Endothelial cell of umbilical vein (primary cell): ENCODE measurements at regions of chr2 and their contacts with region 1.

Region 1: DNA sequence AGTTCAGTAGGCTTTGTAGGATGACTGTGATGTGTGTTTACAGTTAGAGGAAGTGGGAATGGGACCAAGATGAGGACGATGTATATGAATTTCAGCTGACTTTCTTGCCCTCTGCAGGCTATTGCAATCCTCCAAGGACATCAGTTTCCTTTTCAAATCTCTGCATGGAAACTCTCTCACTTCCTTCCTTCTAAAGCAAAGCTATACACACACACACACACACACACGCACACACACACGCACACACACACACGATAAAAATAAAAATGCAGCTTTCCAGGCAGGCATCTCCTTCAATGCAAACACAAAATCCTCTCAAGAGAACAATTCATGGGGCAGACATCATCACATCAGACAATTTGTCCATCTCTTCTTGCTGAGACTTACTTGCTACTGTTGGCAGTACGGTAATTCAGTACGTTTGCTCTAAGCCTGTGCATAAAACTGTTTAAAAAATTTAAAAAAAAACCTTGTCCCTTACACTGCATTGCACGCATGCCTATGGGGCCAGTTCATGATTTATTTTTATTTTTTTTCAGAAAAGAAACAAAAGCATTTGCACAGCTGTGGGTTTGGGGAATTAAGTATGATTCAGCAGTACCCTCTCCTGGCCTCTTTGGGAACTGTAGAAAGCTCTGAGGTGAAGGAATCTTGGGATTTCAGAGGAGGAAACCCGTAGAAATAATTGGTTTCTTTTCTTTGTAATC is 27.1 kb upstream of the ICOS start:
- DNase-seq: peak; percentile 74
- H3K4me3 ChIP-seq: peak overlapping the region in 1 of 3 experiments; percentile 47
- H3K27ac ChIP-seq: no peak overlapping the region
- H3K4me1 ChIP-seq: peaks cover 8% of the 10 kb centered on the region
- H3K27me3 ChIP-seq: no peaks in the 10 kb centered on the region
- CTCF ChIP-seq: peak; percentile 57 to 59
- POLR2A ChIP-seq: no peak

Region 2: DNA sequence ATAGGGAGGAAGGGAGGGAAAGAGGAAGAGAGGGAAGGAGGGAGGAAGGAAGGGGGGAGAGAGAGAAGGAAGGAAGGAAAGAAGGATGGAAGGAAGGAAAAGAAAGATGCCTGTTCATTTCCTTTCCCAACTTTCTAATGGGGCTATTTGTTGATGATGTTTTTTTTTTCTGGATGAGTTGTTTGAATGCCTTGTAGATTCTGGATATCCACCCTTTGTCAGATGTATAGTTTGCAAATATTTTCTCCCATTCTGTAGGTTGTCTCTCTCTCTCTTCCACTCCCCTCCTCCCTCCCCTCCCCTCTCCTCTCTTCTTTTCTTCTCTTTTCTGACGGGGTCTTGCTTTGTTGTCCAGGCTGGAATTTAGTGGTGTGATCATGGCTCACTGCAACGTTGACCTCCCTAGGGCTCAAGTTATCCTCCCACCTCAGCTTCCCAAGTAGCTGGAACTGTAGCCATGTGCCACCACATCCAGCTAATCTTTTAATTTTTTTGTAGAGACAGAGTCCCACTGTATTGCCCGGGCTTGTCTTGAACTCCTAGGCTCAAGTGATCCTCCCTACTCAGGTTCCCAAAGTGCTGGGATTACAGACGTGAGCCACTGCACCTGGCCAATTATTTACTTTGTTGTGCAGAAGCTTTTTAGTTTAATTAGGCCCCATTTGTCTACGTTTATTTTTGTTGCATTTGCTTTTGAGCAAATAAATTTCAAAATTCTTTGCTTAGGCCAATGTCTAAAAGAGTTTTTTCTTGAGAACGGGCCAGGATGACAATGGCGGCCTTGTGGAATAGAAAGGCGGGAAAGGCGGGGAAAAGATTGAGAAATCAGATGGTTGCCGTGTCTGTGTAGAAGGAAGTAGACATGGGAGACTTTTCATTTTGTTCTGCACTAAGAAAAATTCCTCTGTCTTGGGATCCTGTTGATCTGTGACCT is 1331.9 kb before region 1 on chr2:
- CTCF ChIA-PET with region 1: interaction called, 11 read pairs
- POLR2A ChIA-PET with region 1: no interaction called
- dilution Hi-C with region 1: no loop called
- intact Hi-C with region 1: loop called (anchors 2 kb)
- DNase-seq: no peak
- H3K4me3 ChIP-seq: no peak overlapping the region
- H3K27ac ChIP-seq: no peak overlapping the region
- H3K4me1 ChIP-seq: no peaks in the 10 kb centered on the region
- H3K27me3 ChIP-seq: no peaks in the 10 kb centered on the region
- CTCF ChIP-seq: no peak
- POLR2A ChIP-seq: no peak

Region 3: DNA sequence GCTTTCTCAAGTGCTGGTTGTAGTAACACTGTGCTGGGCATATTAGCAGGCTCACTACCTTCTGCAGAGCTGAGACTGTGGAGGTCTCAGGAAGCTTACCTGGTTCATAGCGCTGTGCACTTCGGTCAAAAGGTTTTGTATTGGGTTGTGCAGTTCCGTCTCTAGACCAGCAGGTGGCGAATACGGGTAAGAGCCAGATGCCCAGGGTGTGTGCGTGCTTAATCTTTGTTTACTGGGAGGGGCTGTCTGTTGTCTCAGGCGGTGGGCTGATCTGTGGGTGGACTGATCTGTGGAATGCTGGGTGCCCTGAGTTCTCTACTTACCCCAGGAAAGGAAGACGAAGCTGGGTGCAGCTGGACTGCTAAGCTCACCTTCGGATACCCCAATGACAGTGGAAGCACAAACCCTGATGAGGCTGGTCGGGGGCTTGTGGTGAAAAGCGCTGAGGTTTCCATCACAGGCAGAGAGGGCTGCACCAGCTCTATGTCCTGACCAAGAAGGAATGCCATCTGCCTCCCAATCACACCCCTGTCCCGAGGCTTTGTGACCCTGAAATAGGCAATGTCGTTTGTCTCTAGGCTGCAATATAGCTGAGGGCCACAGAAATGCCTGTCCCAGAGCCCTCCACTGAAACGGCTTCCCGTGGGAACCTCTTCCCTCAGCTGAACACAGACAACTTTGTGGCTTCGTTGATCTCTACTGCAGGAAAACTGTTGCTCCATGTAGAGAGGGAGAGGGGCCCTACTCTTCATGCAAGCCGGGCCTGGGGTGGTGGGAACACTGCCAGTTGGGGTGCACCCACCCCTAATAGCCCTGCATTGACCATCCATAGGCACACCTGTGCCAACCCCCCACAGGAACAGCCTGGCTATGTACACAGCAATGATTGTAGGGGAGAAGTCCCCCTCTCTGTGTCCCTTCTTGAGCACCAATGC is 1320.5 kb before region 1 on chr2:
- CTCF ChIA-PET with region 1: interaction called, 50 read pairs
- POLR2A ChIA-PET with region 1: no interaction called
- dilution Hi-C with region 1: no loop called
- intact Hi-C with region 1: loop called (anchors 1 kb)
- DNase-seq: peak; percentile 68
- H3K4me3 ChIP-seq: no peak overlapping the region
- H3K27ac ChIP-seq: no peak overlapping the region
- H3K4me1 ChIP-seq: no peaks in the 10 kb centered on the region
- H3K27me3 ChIP-seq: no peaks in the 10 kb centered on the region
- CTCF ChIP-seq: peak; percentile 85 to 90
- POLR2A ChIP-seq: no peak

Region 4: DNA sequence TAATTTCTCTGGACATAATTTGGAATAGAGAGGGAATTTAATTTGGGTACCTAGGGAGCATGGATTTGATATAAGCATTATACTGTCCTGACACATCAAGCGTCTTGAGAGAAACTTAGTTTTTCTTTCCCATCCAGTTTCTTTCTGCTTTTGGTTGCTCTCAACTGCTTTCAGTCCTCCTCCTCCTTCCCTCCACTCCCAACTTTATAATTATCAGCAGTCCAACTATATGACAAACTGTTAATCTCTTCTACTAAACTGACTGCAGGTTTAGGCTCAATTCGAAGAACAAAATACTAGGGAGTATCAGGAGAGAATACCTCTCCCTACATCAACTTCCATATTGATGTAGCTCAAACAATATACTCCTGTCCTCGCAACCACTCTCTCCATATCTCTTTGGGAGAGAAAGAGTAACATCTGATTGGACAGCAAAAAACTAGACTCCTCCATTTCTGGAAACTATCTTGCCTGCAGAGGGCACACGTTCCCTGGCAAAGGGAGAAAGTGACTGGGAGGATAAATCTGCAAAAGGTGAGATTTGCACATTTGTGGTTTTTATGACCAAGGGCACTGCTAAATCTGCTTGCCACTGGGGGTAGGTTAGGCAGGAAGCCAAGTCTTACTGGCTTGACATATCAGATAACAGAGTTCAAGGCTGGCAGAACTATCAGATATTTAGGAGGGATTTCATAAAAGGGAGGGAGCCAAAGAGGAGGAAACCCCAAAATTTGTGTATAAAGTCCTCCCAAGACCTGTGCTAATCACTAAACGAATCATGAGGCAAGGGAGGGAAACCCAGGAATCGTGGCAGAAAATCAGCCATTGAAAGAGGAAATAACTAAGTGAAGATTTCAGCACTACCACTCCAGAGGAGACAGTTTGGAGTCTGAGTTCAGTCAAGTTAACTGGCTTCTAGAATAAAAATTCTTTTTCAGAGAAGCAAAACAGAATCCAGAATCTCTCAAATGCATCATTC is 1077.9 kb before region 1 on chr2:
- CTCF ChIA-PET with region 1: interaction called, 4 read pairs
- POLR2A ChIA-PET with region 1: no interaction called
- dilution Hi-C with region 1: no loop called
- intact Hi-C with region 1: loop called (anchors 1 kb)
- DNase-seq: peak; percentile 75
- H3K4me3 ChIP-seq: no peak overlapping the region
- H3K27ac ChIP-seq: no peak overlapping the region
- H3K4me1 ChIP-seq: peaks cover 15% of the 10 kb centered on the region
- H3K27me3 ChIP-seq: no peaks in the 10 kb centered on the region
- CTCF ChIP-seq: peak; percentile 56 to 61
- POLR2A ChIP-seq: no peak

Region 5: DNA sequence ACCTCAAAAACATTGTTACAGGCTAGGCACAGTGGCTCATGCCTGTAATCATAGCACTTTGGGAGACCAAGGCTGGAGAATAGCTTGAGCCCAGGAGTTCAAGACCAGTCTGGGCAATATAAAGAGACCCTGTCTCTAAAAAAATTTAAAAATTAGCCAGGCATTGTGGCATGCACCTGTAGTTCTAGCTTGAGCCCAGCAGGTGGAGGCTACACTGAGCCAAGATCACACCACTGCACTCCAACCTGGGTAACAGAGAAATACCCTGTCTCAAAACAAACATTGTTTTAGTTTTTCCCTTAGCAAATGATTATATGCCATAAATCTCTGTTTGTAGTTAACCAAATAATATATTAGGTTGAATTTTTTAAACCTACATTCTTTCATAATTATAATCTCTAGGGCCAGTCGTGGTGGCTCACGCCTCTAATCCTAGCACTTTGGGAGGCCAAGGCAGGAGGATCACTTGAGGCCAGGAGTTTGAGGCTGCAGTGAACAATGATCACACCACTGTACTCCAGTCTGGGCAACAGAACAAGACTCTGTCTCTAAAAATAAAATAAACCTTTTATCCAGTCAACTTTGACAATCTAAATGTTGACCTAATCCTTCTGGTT is 683.9 kb before region 1 on chr2:
- CTCF ChIA-PET with region 1: interaction called, 14 read pairs
- POLR2A ChIA-PET with region 1: no interaction called
- dilution Hi-C with region 1: no loop called
- intact Hi-C with region 1: loop called (anchors 2 kb)
- DNase-seq: peak; percentile 32
- H3K4me3 ChIP-seq: no peak overlapping the region
- H3K27ac ChIP-seq: no peak overlapping the region
- H3K4me1 ChIP-seq: no peaks in the 10 kb centered on the region
- H3K27me3 ChIP-seq: no peaks in the 10 kb centered on the region
- CTCF ChIP-seq: peak; percentile 51 to 66
- POLR2A ChIP-seq: no peak

Region 6: GRCh38 chr2:203484266-203485112 is 424.9 kb before region 1 on chr2:
- CTCF ChIA-PET with region 1: interaction called, 5 read pairs
- POLR2A ChIA-PET with region 1: no interaction called
- dilution Hi-C with region 1: no loop called
- intact Hi-C with region 1: loop called (anchors 1 kb)
- DNase-seq: peak; percentile 45
- H3K4me3 ChIP-seq: no peak overlapping the region
- H3K27ac ChIP-seq: no peak overlapping the region
- H3K4me1 ChIP-seq: no peaks in the 10 kb centered on the region
- H3K27me3 ChIP-seq: no peaks in the 10 kb centered on the region
- CTCF ChIP-seq: peak; percentile 23 to 51
- POLR2A ChIP-seq: no peak

Region 7: DNA sequence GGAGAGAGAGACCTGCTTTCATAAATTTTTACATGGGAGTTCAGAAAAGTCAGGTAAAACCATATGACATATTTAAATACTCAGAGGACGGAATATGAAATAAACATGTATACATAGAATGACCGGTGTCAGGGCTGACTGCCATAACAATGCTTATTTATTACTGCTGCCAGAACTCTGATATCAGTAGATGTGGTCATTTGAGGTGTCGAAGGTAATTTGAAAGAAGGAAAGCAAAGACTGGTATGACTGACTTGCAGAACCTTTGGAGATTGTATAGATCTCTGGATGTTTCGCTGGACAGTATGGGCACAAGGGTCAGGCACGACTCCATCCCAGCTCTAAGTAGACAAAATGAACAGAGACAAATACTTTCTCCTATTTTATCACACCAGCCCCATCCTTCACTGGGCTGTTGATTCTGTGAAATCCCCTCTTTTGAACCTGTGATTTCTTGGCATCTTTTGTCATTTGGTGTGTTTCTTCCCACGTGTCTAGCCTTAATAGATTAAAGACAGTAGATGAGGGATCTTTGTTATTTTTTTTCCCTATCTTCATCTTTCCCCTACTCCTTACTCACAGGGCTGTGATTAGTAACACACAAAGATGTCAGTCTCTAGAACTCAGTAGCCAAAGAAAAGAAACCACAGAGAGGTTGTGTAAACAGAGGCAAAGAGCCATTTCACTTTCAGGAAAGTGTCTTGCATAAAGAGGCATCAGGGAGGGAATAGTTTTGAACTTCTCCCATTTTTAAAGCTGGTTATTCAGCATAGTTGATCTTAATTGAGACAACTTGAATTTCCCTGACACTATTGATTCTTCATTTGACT is 88.8 kb after region 1 on chr2:
- CTCF ChIA-PET with region 1: no interaction called
- POLR2A ChIA-PET with region 1: no interaction called
- dilution Hi-C with region 1: no loop called
- intact Hi-C with region 1: no loop called
- DNase-seq: no peak
- H3K4me3 ChIP-seq: no peak overlapping the region
- H3K27ac ChIP-seq: no peak overlapping the region
- H3K4me1 ChIP-seq: no peaks in the 10 kb centered on the region
- H3K27me3 ChIP-seq: peaks cover 22 to 29% of the 10 kb centered on the region in 2 experiments
- CTCF ChIP-seq: no peak
- POLR2A ChIP-seq: no peak